CD8-positive, alpha-beta T cell (primary cell): ENCODE measurements at regions of chr11 and their contacts with region 1.

Region 1: GRCh38 chr11:77479746-77480352 is 6.0 kb upstream of the PAK1 start:
- DNase-seq: no peak
- ATAC-seq: no peak
- H3K4me3 ChIP-seq: no peak overlapping the region
- H3K4me3 Mint-ChIP-seq: no peak overlapping the region
- H3K27ac ChIP-seq: no peak overlapping the region
- H3K27ac Mint-ChIP-seq: no peak overlapping the region
- H3K4me1 ChIP-seq: no peaks in the 10 kb centered on the region
- H3K4me1 Mint-ChIP-seq: peaks cover 4% of the 10 kb centered on the region
- H3K27me3 ChIP-seq: no peaks in the 10 kb centered on the region
- H3K27me3 Mint-ChIP-seq: peaks cover 2% of the 10 kb centered on the region
- CTCF ChIP-seq: no peak

Region 2: GRCh38 chr11:77438487-77438886 is 41.4 kb before region 1 on chr11:
- CTCF ChIA-PET with region 1: no interaction called
- POLR2A ChIA-PET with region 1: no interaction called
- intact Hi-C with region 1: no loop called
- DNase-seq: no peak
- ATAC-seq: no peak
- H3K4me3 ChIP-seq: no peak overlapping the region
- H3K4me3 Mint-ChIP-seq: no peak overlapping the region
- H3K27ac ChIP-seq: no peak overlapping the region
- H3K27ac Mint-ChIP-seq: no peak overlapping the region
- H3K4me1 ChIP-seq: no peaks in the 10 kb centered on the region
- H3K4me1 Mint-ChIP-seq: no peaks in the 10 kb centered on the region
- H3K27me3 ChIP-seq: no peaks in the 10 kb centered on the region
- H3K27me3 Mint-ChIP-seq: no peaks in the 10 kb centered on the region
- CTCF ChIP-seq: no peak

Region 3: GRCh38 chr11:77734890-77735289 is 255.0 kb after region 1 on chr11:
- CTCF ChIA-PET with region 1: no interaction called
- POLR2A ChIA-PET with region 1: no interaction called
- intact Hi-C with region 1: no loop called
- DNase-seq: no peak
- ATAC-seq: no peak
- H3K4me3 ChIP-seq: no peak overlapping the region
- H3K4me3 Mint-ChIP-seq: no peak overlapping the region
- H3K27ac ChIP-seq: no peak overlapping the region
- H3K27ac Mint-ChIP-seq: no peak overlapping the region
- H3K4me1 ChIP-seq: no peaks in the 10 kb centered on the region
- H3K4me1 Mint-ChIP-seq: no peaks in the 10 kb centered on the region
- H3K27me3 ChIP-seq: no peaks in the 10 kb centered on the region
- H3K27me3 Mint-ChIP-seq: no peaks in the 10 kb centered on the region
- CTCF ChIP-seq: no peak

Region 4: DNA sequence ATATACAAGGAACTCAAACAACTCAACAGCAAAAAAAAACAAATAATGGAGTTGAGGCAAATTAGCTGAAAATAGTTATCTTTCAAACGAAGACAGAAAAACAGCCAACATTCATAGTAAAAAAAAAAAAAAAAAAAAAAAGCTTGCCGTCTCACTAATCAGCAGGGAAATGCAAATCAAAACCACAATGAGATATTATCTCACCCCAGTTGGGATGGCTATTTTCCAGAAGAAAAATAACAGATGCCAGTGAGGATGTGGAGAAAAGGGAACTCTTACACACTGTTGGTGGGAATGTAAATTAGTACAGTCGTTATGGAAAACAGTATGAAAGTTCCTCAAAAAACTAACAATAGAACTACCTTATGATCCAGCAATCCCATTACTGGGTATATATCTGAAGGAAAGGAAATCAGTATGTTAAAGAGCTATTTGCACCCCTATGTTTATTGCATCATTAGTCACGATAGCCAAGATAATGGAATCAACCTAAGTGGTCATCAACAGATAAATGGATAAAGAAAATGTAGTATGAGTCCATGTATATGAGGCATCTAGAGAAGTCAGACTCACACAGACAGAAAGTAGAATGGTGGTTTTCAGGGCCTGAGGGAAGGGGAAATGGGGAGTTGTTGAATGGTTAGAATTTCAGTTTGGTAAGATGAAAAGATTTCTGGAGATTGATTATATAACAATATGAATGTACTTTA is 764.9 kb after region 1 on chr11:
- CTCF ChIA-PET with region 1: no interaction called
- POLR2A ChIA-PET with region 1: no interaction called
- intact Hi-C with region 1: loop called in 1 of 2 experiments (anchors 5 kb)
- DNase-seq: no peak
- ATAC-seq: no peak
- H3K4me3 ChIP-seq: no peak overlapping the region
- H3K4me3 Mint-ChIP-seq: no peak overlapping the region
- H3K27ac ChIP-seq: no peak overlapping the region
- H3K27ac Mint-ChIP-seq: no peak overlapping the region
- H3K4me1 ChIP-seq: no peaks in the 10 kb centered on the region
- H3K4me1 Mint-ChIP-seq: no peaks in the 10 kb centered on the region
- H3K27me3 ChIP-seq: no peaks in the 10 kb centered on the region
- H3K27me3 Mint-ChIP-seq: no peaks in the 10 kb centered on the region
- CTCF ChIP-seq: no peak